ENCODE measurements at regions of chr10 and their contacts with region 1.

Region 1: GRCh38 chr10:36779234-36779846 is 346.1 kb upstream of the ANKRD30A start:
- DNase-seq: peak; percentile 47 to 70
- ATAC-seq: peak; percentile 90 to 94
- H3K4me3 ChIP-seq: no peak overlapping the region
- H3K27ac ChIP-seq: 0 out of 6 replicates have a peak overlapping the region, but pooled peaks of 1 of the 2 experiments have one; percentile 22
- H3K4me1 ChIP-seq: peaks cover 10% of the 10 kb centered on the region; the same call in 2 of the 3 replicates
- CTCF ChIP-seq: peak; percentile 85
- EP300 ChIP-seq: no peak
- POLR2A ChIP-seq: no peak
- RAD21 ChIP-seq: peak; percentile 94 to 95

Region 2: GRCh38 chr10:35613597-35614226 is 1165.6 kb before region 1 on chr10:
- CTCF ChIA-PET with region 1: interaction called, 27 read pairs
- POLR2A ChIA-PET with region 1: no interaction called
- DNase-seq: peak; percentile 22 to 46
- ATAC-seq: peak; percentile 88 to 91; a peak in 5 of 6 replicates
- H3K4me3 ChIP-seq: no peak overlapping the region
- H3K27ac ChIP-seq: no peak overlapping the region
- H3K4me1 ChIP-seq: no peaks in the 10 kb centered on the region
- CTCF ChIP-seq: peak; percentile 60
- EP300 ChIP-seq: no peak
- POLR2A ChIP-seq: no peak
- RAD21 ChIP-seq: peak; percentile 72 to 75

Region 3: DNA sequence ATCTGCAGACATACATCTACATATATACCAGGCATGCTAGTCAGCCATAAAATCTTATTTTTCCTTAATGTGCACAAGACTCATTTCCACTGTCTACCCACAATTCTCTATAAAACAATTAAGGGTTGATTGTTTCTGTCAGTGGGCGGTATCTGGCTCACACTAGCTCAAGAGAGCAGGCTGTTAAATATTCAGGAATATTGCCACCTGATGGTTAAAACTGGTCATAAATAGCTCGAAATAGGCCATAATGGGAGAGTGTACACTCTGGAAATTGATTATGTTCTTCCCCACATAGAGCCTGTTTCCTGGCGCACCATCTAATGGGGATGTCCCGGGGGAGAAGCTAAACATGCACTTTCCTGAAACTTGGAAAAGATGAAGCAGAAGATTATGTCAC is 274.6 kb before region 1 on chr10:
- CTCF ChIA-PET with region 1: no interaction called
- POLR2A ChIA-PET with region 1: no interaction called
- DNase-seq: no peak
- ATAC-seq: no peak
- H3K4me3 ChIP-seq: no peak overlapping the region
- H3K27ac ChIP-seq: no peak overlapping the region
- H3K4me1 ChIP-seq: no peaks in the 10 kb centered on the region
- CTCF ChIP-seq: no peak
- EP300 ChIP-seq: no peak
- POLR2A ChIP-seq: no peak
- RAD21 ChIP-seq: no peak

Region 4: GRCh38 chr10:36765782-36766414 is 13.4 kb before region 1 on chr10:
- CTCF ChIA-PET with region 1: interaction called, 12 read pairs
- POLR2A ChIA-PET with region 1: no interaction called
- DNase-seq: no peak
- ATAC-seq: no peak
- H3K4me3 ChIP-seq: no peak overlapping the region
- H3K27ac ChIP-seq: no peak overlapping the region
- H3K4me1 ChIP-seq: no peaks in the 10 kb centered on the region; the same call in 2 of the 3 replicates
- CTCF ChIP-seq: no peak
- EP300 ChIP-seq: no peak
- POLR2A ChIP-seq: no peak
- RAD21 ChIP-seq: no peak

Measured in A549 (cell line).